OCI-LY7 (cell line): ENCODE measurements at regions of chr9 and their contacts with region 1.

Region 1: GRCh38 chr9:101235105-101235866 is 149.5 kb downstream of the BAAT start:
- DNase-seq: peak; percentile 4
- H3K4me3 ChIP-seq: no peak overlapping the region
- H3K27ac ChIP-seq: no peak overlapping the region
- H3K4me1 ChIP-seq: no peaks in the 10 kb centered on the region
- CTCF ChIP-seq: peak; percentile 68

Region 2: GRCh38 chr9:101201630-101202029 is 33.7 kb before region 1 on chr9:
- CTCF ChIA-PET with region 1: no interaction called
- POLR2A ChIA-PET with region 1: no interaction called
- intact Hi-C with region 1: no loop called
- DNase-seq: no peak
- H3K4me3 ChIP-seq: no peak overlapping the region
- H3K27ac ChIP-seq: no peak overlapping the region
- H3K4me1 ChIP-seq: no peaks in the 10 kb centered on the region
- CTCF ChIP-seq: no peak

Region 3: GRCh38 chr9:101254733-101255473 is 19.6 kb after region 1 on chr9:
- CTCF ChIA-PET with region 1: no interaction called
- POLR2A ChIA-PET with region 1: no interaction called
- intact Hi-C with region 1: loop called (anchors 1 kb)
- DNase-seq: no peak
- H3K4me3 ChIP-seq: no peak overlapping the region
- H3K27ac ChIP-seq: no peak overlapping the region
- H3K4me1 ChIP-seq: no peaks in the 10 kb centered on the region
- CTCF ChIP-seq: no peak